Breast epithelium (tissue), 4 donors: ENCODE measurements at regions of chr7 and their contacts with region 1.

Region 1: DNA sequence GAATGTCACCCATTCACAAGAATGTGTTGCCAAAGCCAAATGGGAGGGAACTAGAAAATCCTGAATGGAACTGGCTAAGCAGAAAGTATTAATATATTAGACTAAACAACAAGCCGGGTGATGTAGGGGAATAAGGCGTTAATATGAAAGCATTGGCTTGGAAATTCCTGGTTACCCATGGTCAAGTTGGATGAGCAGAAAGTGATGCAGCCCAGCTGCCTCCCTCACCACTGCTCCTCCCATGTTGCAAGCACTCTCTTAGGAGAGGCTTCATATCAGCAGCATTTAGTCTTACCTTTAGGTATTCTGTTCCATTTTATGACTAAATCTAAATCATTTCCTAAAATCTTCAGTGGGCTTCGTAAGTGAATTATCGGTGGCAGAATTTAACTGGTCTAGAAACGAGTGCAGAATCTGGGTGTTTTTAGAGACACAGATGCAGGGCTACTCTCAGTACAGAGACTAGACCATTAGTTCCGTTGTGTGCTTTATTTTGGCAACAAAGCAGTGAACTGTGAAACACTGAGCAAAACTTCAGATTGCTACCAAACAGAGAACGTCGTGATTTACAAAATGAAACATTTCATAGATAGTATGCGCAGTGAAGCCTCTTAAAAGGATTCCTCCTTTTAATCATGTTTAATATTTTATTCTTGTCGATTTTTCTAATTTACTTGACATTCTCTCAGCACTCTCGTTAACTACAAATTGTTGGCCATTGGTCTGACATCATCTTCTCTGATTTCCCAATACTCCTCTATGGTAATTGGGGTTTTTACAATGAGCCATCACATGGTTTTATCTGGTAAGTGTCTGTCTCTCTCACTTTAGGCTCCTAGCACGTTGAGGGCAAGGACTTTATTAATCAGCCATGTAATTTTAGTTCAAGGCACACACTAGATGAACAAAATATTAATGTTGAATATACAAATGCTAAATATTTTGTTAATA is 22.0 kb upstream of the HGF start:
- DNase-seq: no peak
- H3K4me3 ChIP-seq: no peak overlapping the region
- H3K27ac ChIP-seq: no peak overlapping the region
- H3K4me1 ChIP-seq: no peaks in the 10 kb centered on the region
- H3K27me3 ChIP-seq: no peaks in the 10 kb centered on the region
- CTCF ChIP-seq: no peak
- POLR2A ChIP-seq: no peak

Region 2: GRCh38 chr7:81744389-81744788 is 47.5 kb before region 1 on chr7:
- intact Hi-C with region 1: loop called (anchors 2 kb)
- DNase-seq: no peak
- H3K4me3 ChIP-seq: no peak overlapping the region
- H3K27ac ChIP-seq: no peak overlapping the region
- H3K4me1 ChIP-seq: no peaks in the 10 kb centered on the region
- H3K27me3 ChIP-seq: no peaks in the 10 kb centered on the region
- CTCF ChIP-seq: no peak
- POLR2A ChIP-seq: no peak

Region 3: GRCh38 chr7:81761821-81762220 is 30.0 kb before region 1 on chr7:
- intact Hi-C with region 1: no loop called
- DNase-seq: no peak
- H3K4me3 ChIP-seq: no peak overlapping the region
- H3K27ac ChIP-seq: no peak overlapping the region
- H3K4me1 ChIP-seq: no peaks in the 10 kb centered on the region
- H3K27me3 ChIP-seq: no peaks in the 10 kb centered on the region
- CTCF ChIP-seq: no peak
- POLR2A ChIP-seq: no peak

Region 4: DNA sequence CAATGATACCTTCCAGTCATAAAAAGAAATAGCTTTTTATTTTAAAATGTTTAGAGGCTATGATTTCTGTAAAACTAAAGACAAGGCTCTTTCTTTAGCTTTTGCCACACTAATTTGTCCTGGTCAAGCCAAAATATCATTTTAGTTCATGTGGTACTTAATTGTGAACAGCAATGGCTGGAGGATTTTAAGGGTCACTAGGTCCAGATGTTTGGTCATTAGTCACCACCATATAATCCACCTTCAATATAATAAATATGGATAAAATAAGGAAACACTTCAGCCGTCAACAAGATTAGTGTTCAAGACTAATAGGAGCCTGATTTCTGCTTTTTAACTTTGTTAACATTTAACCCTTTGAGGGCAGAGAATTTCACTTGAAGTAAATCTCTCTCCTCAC is 28.0 kb after region 1 on chr7:
- intact Hi-C with region 1: no loop called
- DNase-seq: no peak
- H3K4me3 ChIP-seq: no peak overlapping the region
- H3K27ac ChIP-seq: no peak overlapping the region
- H3K4me1 ChIP-seq: no peaks in the 10 kb centered on the region
- H3K27me3 ChIP-seq: no peaks in the 10 kb centered on the region
- CTCF ChIP-seq: no peak
- POLR2A ChIP-seq: no peak